Activated CD4-positive, alpha-beta memory T cell treated with anti-CD3 and anti-CD28 coated beads for 36 hours (primary cell): ENCODE measurements at regions of chr1 and their contacts with region 1.

Region 1: DNA sequence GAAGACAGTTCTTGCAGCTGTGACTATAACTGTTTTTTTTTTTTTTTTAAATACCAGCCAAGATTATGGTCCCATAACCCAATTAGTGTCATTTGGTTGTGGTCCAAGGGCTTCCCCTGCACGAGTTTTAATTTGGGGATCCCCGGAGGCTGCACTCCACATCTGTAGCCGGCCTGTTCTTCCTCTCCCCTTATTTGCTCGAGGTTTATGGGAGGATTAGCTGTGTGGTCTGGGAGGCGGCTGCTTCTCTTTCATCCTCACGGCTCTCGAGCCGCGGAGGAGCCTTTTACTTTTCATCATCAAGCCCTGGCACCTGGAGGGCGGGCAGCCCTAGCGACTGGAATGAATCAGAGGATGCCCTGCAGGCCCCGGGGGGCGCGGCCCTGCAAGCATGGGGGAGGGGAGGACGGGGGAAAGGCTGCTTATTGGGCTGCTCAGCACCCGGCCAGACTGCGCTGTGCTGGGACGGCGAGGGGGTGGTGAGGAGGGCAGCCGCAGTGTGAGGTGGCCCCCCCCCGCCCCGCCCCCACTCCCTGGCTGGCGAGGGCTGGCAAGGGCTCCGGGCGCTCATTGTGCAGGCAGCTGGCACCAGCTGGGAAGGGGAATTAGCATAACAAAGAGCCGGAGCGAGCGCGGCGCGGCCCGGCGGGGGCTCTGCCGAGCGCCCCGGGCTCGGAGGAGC is 18.5 kb downstream of the SERTAD4 start:
- DNase-seq: peak; percentile 50
- H3K4me3 Mint-ChIP-seq: peak overlapping the region; percentile 38
- H3K27ac Mint-ChIP-seq: no peak overlapping the region
- H3K4me1 Mint-ChIP-seq: peaks cover 23% of the 10 kb centered on the region
- H3K27me3 Mint-ChIP-seq: peaks cover 66% of the 10 kb centered on the region

Region 2: DNA sequence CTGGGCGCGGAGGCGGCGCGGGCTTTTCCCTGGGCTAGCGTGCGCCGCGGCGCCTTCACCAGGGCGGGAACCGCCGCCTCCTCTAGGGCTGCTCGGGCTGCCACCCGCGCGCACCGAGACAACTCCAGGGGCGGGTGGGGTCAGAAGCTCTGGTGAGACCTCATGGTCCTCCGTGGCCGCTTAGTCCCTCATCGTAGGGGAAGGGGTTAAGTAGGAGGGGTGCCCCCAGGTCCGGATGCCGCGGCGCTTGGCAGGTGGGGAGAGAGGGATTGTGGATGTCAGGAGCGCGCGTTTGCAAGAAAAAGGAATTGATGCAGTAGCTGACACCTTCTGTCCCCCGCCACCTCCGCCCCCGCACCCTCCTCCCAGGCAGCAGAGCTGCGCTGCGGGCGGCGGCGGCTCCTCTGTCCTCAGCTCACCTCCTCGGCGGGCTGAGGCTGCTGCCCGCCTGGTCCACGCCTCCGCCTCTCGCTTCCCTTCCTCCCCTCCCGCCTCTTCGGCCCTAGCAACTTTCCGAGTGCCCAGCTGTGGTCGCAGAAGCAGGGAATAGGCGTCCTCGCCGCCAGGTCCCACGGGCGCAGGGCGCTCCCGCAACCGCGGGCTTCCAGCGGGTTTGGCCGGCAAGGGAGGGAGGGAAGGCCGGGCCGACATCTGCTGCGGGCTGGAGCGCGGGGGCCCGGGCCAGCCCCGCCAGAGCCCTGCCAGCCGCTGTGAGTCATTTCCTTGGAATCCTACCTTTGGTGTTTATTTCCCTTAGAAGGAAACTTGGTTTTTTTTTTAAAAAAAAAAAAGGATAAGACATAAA is 17.7 kb before region 1 on chr1:
- CTCF ChIA-PET with region 1: no interaction called
- POLR2A ChIA-PET with region 1: interaction called, 3 read pairs
- intact Hi-C with region 1: loop called (anchors 2 kb)
- DNase-seq: peak; percentile 53
- H3K4me3 Mint-ChIP-seq: peak overlapping the region; percentile 36
- H3K27ac Mint-ChIP-seq: no peak overlapping the region
- H3K4me1 Mint-ChIP-seq: peaks cover 8% of the 10 kb centered on the region
- H3K27me3 Mint-ChIP-seq: peaks cover 54% of the 10 kb centered on the region

Region 3: DNA sequence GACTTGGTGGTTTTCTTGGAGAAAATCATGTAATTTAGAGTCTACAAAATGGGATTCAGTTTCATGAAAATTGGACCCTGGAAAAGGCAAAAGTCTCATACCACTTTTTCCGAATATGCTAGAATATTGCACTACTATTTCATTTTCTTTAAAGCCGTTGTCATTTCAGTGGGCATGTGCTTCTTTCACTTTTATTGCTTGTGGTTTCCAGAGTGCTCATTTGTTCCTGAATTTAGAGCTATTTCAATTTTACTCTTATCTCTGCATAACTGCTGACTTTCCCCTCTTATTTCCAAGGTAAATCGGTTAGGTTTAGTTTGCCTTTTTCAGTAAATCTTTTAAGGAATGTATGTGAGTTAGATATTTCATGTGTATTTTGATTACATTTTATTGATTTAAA is 89.2 kb after region 1 on chr1:
- CTCF ChIA-PET with region 1: no interaction called
- POLR2A ChIA-PET with region 1: no interaction called
- intact Hi-C with region 1: no loop called
- DNase-seq: no peak
- H3K4me3 Mint-ChIP-seq: no peak overlapping the region
- H3K27ac Mint-ChIP-seq: peak overlapping the region; percentile 68
- H3K4me1 Mint-ChIP-seq: peaks cover 21% of the 10 kb centered on the region
- H3K27me3 Mint-ChIP-seq: no peaks in the 10 kb centered on the region